PC-9 (cell line): ENCODE measurements at regions of chr6 and their contacts with region 1.

Region 1: DNA sequence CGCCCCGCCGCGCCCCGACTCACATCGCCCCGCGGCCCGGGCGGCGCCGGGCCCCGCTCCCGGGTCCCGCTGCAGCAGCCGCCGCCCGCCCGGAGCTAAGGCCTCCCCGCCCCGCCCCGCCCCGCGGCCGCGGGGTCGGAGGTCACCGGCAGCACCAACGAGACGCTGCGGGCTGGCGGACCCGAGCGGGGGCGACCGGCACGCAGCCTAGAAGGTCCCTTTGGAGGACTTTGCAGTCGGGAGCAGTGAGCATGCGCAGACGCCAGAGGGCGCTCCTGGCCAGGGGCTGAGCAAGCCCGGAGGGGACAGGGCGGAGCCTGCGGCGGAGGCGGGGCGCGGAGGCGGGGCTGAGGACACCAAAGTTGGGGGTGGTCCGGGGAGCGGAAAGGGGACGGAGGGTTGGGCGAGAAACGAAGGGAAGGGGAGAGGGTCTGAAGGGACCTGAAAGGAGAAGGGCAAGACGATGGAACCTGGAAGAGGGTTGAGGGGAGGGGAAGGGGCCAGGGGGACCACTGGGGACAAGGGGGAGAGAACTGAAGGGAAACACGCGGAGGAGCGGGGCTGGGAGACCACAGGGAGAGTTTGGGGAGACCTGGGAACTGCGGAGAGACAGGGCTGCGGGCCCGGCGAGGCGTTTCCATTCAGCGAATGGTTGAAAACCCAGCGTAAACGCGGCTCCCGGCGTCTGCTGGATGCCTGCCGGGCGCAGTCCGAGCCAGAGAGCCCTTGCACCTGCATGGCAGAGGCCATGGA is at the start of gene FRS3:
- DNase-seq: peak; percentile 79 to 97
- H3K4me3 ChIP-seq: peak within 1 kb of the TSS; percentile 94
- H3K27ac ChIP-seq: peak within 1 kb of the TSS; percentile 43; the same call in 1 of the 2 replicates
- H3K4me1 ChIP-seq: peaks cover 34% of the 10 kb centered on the region
- H3K27me3 ChIP-seq: no peaks in the 10 kb centered on the region
- CTCF ChIP-seq: peak; percentile 88
- total RNA-seq, gene FRS3: 4.5 and 10.4 TPM in 2 replicates

Region 2: GRCh38 chr6:41602864-41603608 is 176.9 kb before region 1 on chr6:
- CTCF ChIA-PET with region 1: no interaction called
- POLR2A ChIA-PET with region 1: no interaction called
- intact Hi-C with region 1: loop called (anchors 1 kb)
- DNase-seq: peak; percentile 62 to 76
- H3K4me3 ChIP-seq: no peak overlapping the region; the same call in 1 of the 2 replicates
- H3K27ac ChIP-seq: no peak overlapping the region
- H3K4me1 ChIP-seq: no peaks in the 10 kb centered on the region
- H3K27me3 ChIP-seq: no peaks in the 10 kb centered on the region
- CTCF ChIP-seq: peak; percentile 92

Region 3: GRCh38 chr6:41705996-41706835 is 73.8 kb before region 1 on chr6:
- CTCF ChIA-PET with region 1: interaction called, 8 read pairs
- POLR2A ChIA-PET with region 1: no interaction called
- intact Hi-C with region 1: loop called (anchors 1 kb)
- DNase-seq: peak in 1 of 2 experiments; percentile 53
- H3K4me3 ChIP-seq: no peak overlapping the region
- H3K27ac ChIP-seq: no peak overlapping the region
- H3K4me1 ChIP-seq: no peaks in the 10 kb centered on the region
- H3K27me3 ChIP-seq: no peaks in the 10 kb centered on the region
- CTCF ChIP-seq: peak; percentile 66

Region 4: GRCh38 chr6:41859356-41859755 is 79.4 kb after region 1 on chr6:
- CTCF ChIA-PET with region 1: no interaction called
- POLR2A ChIA-PET with region 1: no interaction called
- intact Hi-C with region 1: no loop called
- DNase-seq: no peak
- H3K4me3 ChIP-seq: no peak overlapping the region
- H3K27ac ChIP-seq: no peak overlapping the region
- H3K4me1 ChIP-seq: no peaks in the 10 kb centered on the region
- H3K27me3 ChIP-seq: no peaks in the 10 kb centered on the region
- CTCF ChIP-seq: no peak

Region 5: DNA sequence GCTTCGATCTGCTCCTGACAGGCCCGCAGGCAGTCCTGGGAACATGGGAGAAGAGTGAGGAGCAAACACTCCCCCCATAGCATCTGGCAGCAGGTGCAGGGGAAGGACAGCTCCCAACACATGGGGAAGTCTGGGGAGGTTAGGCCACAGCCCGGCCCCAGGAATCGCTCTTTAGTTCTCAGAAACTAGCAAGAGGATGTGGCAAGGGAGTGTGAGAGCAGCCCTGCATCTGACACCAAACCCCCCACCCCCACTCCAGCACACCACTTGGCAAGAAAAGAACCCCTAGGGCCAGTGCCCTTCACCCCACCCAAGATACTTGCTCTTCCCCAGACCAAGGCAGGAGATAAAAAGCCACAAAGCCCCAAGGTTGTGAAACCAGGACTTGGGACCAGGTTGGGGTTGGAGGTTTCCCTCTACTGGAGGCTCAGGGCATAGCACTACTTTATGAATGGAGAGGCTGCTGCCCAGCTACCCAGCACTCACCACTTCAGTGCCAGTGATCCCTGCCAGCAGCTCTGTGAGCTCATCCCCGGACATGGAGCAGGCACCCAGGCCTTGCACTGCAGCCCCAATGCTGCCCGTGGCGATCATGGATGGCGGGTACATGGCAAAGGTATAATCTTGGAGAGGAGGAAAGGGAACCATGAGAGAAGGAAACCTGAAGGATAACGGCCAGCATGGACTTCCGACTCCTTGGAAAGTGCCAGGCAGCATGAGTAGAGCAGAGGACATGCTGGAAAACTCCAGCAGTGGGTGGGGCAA is 156.3 kb after region 1 on chr6:
- CTCF ChIA-PET with region 1: interaction called, 5 read pairs
- POLR2A ChIA-PET with region 1: no interaction called
- intact Hi-C with region 1: loop called (anchors 5 kb)
- DNase-seq: peak; percentile 72
- H3K4me3 ChIP-seq: no peak overlapping the region
- H3K27ac ChIP-seq: peak overlapping the region; percentile 41
- H3K4me1 ChIP-seq: peaks cover 19% of the 10 kb centered on the region; the same call in 1 of the 2 replicates
- H3K27me3 ChIP-seq: no peaks in the 10 kb centered on the region
- CTCF ChIP-seq: peak; percentile 91

Region 6: GRCh38 chr6:42166444-42167141 is 386.6 kb after region 1 on chr6:
- CTCF ChIA-PET with region 1: no interaction called
- POLR2A ChIA-PET with region 1: no interaction called
- intact Hi-C with region 1: loop called (anchors 1 kb)
- DNase-seq: peak; percentile 67 to 83
- H3K4me3 ChIP-seq: no peak overlapping the region
- H3K27ac ChIP-seq: no peak overlapping the region
- H3K4me1 ChIP-seq: 0 out of 2 replicates have a peak, but pooled peaks cover 7% of the 10 kb centered on the region
- H3K27me3 ChIP-seq: no peaks in the 10 kb centered on the region
- CTCF ChIP-seq: peak; percentile 100

Region 7: GRCh38 chr6:42879372-42880239 is 1099.6 kb after region 1 on chr6 and contains the start of gene RPL7L1:
- CTCF ChIA-PET with region 1: interaction called, 4 read pairs
- POLR2A ChIA-PET with region 1: no interaction called
- intact Hi-C with region 1: loop called (anchors 5 kb)
- DNase-seq: peak; percentile 74 to 84
- H3K4me3 ChIP-seq: peak within 1 kb of the TSS; percentile 96
- H3K27ac ChIP-seq: peak within 1 kb of the TSS; percentile 91
- H3K4me1 ChIP-seq: peaks cover 10% of the 10 kb centered on the region
- H3K27me3 ChIP-seq: no peaks in the 10 kb centered on the region
- CTCF ChIP-seq: 0 out of 2 replicates have a peak, but pooled peaks have one; percentile 14
- total RNA-seq, gene RPL7L1: 84.1 and 87.1 TPM in 2 replicates